Cardiac septum (tissue), 1 donor: ENCODE measurements at regions of chr9 and their contacts with region 1.

Region 1: DNA sequence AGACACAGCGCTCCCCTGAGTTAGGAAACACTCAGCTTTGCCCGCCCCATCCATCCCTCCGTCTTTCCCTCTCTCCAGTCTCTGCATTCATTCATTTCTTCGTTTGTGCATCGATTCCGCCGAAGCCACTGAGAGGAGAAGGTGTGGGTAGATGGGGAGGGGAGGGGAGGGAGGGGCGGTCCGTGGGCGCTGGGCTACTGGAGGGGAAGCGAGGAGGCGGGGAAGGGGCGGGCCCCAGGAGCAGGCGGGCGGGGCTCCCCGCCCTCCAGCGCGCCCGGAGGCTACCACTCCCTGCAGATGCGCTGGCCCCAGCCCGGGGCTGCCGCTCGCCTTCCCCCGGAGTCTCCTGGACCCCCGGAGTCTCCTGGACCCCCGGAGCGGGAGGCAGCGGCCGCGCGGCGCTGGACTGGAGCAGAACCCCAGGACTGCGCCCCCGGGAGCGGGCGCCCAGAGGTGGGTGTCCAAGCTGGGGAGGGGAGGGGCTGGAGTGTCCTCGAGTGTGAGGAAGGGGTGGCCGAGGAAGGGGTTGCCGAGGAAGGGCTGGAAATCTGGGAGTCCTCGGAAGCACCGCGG is 159.5 kb downstream of the C9orf152 start:
- DNase-seq: peak; percentile 92

Region 2: DNA sequence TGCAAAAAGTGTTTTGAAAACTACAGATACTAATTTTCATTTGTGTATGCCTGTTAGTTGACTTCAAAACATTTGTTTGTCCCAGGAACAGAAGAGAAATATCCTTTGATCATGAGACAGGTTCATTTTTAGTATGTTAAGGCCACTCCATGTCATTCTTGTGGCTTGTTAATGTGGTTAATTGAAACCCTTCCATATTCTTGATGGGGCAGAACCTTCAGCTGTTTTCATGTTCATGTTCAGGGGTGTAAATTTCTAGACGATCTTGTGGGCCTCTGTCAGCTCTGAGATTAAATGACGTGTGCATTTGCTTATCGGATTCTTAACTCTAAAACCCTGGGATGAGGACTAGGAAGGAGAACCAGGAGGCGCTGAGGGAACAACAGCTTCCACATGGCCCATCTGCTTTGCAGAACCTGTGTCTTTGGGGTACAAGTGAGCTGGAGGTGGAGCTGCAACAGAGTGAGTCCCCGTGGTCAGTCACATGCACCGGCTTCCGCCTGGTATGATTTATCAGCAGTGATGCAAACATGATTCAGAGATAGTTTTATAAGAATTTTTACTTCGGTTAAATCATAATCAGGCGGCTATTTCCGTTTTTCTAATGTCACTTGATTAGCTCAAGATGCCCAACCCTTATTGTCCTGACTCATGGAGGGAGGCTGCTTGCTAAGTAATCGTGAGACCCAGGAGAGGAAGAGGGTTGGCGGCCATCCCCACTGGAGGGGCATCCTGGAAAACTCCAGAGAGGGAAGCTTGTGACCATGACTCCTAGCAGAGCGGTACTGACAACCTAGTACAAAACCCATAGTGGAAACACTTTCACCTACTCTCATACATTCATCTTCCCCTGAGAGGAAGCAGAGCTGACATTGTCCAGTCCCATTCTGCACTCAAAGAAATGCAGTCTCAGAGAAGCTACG is 21.1 kb after region 1 on chr9:
- intact Hi-C with region 1: loop called (anchors 1 kb)
- DNase-seq: peak; percentile 87

Region 3: GRCh38 chr9:110192531-110193261 is 144.2 kb after region 1 on chr9:
- intact Hi-C with region 1: no loop called
- DNase-seq: no peak